ENCODE measurements at regions of chr2 and their contacts with region 1.

Region 1: GRCh38 chr2:181466661-181467576 is 9.7 kb downstream of the ITGA4 start:
- DNase-seq: no peak
- H3K4me3 ChIP-seq: no peak overlapping the region
- CTCF ChIP-seq: peak; percentile 69

Region 2: DNA sequence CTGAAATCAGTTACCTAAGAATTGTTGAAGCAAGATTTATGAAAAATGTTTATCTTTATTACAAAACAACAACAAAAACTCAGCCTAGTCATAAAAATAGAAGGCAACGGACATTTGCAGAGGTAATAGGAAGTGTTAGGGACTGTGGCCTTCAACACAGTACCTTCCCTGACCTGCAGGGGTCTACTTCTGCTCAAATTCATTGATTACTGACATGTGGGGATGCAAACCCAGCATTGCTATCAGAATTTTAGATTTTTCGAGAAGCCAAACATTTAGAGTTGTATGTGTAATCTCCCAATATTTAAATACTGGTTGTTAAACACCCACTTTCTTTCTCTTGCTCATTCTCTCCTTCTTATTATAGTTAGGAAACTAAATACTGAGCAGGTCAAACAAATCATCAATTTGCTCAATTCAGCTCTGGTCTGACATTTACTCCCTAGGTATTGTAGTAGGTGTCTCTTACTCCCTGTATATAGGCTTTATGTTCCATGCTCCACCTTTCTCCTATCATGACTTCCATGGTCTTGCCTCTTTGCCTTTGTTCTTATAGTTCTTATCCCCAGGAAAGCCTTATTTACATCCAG is 288.0 kb before region 1 on chr2:
- CTCF ChIA-PET with region 1: no interaction called
- POLR2A ChIA-PET with region 1: no interaction called
- DNase-seq: no peak
- H3K4me3 ChIP-seq: no peak overlapping the region
- CTCF ChIP-seq: peak; percentile 31

Region 3: DNA sequence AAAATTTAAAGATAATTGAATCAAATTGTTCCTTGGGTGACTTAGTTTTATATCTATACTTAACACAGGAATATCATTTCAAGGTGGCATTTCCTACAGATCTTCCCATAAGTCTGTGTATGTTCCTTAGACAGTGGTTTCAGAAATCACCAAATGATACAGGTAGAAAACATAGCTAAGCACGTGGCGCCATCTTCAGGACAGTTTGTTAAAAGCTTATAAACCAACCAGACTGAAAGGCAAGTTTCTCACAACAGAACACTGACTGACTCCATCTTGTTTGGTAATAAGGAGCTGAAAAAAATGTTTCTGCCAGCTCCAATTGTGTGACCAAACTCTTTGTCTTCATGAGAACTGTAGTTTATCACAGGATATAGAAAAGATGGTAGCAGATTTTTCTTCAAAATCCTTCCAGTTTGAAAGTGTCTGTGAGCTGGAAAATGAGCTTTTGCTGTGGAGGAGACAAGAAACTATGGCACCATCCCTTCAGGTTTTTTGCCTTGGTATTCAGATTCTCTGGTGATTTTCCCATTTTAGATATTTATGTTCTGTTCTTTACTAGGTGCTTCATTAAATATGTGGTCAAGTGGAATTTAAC is 248.2 kb after region 1 on chr2:
- CTCF ChIA-PET with region 1: interaction called, 14 read pairs
- POLR2A ChIA-PET with region 1: no interaction called
- DNase-seq: peak; percentile 41
- H3K4me3 ChIP-seq: no peak overlapping the region
- CTCF ChIP-seq: peak; percentile 60

Region 4: GRCh38 chr2:181907057-181907456 is 440.1 kb after region 1 on chr2:
- CTCF ChIA-PET with region 1: no interaction called
- POLR2A ChIA-PET with region 1: no interaction called
- DNase-seq: no peak
- H3K4me3 ChIP-seq: no peak overlapping the region
- CTCF ChIP-seq: no peak